ENCODE measurements at regions of chr14 and their contacts with region 1.

Region 1: GRCh38 chr14:60753264-60754119 is 18.9 kb downstream of the MNAT1 start:
- DNase-seq: peak; percentile 65
- H3K4me3 Mint-ChIP-seq: peak overlapping the region; percentile 29
- H3K27ac Mint-ChIP-seq: peak overlapping the region; percentile 66
- H3K4me1 Mint-ChIP-seq: peaks cover 29% of the 10 kb centered on the region
- H3K27me3 Mint-ChIP-seq: peaks cover 5% of the 10 kb centered on the region

Region 2: DNA sequence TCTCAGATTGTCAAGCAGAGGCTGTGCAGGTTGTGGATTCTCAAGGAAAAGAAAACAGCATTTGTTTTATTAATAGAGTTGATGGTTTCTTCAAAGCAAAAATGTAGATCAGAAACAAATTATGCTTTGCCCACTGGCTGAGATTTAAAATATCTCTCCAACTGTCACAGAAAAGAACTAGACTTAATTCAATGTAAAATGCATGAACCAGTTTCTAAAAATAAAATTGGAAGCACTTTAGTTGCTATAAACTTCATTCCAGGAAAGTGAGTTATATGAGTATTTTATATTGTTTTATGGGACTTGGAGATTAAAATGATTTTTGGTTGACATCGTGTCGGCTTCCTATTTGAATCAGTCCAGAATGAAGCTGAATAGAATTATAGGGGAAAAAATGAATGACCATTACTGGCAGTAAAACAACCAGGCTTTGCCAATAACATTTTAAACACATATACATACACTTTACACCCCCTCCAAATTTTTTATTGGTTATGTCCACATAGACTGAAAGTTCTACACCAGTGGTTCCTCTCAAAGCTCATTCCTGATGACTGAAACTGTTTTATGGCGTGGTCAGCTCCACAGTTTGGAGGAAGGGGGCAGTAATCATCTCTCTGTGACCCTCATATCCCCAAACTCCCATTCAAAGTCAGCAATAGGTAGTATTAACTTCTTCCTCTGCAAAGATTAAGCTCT is 1620.5 kb before region 1 on chr14:
- CTCF ChIA-PET with region 1: no interaction called
- POLR2A ChIA-PET with region 1: no interaction called
- intact Hi-C with region 1: no loop called
- DNase-seq: no peak
- H3K4me3 Mint-ChIP-seq: no peak overlapping the region
- H3K27ac Mint-ChIP-seq: no peak overlapping the region
- H3K4me1 Mint-ChIP-seq: no peaks in the 10 kb centered on the region
- H3K27me3 Mint-ChIP-seq: peaks cover 7% of the 10 kb centered on the region

Region 3: DNA sequence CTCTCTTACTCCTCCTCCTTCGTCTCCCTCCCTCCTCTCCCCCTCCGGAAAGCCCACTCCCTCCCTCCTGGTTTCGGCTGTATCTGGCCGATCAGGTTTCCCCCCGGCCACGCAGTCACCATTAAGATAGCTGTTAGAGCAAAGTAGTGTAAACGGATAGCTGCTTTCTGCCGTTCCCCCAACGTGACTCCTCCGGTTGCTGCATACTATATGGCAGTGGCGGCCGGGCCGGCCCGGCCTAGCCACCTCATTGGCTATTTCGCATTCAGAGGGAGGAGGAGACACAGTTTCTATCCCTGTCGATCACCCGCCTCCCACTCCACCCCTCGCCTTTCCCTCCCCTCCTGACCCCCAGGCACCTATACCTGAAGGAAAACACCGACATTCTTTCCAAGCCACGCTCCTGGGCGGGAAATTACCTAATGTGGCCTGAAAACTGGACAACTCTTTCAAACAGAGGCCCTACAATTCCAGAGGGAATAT is 29.3 kb before region 1 on chr14 and contains the start of gene SIX4:
- CTCF ChIA-PET with region 1: interaction called, 3 read pairs
- POLR2A ChIA-PET with region 1: no interaction called
- intact Hi-C with region 1: loop called (anchors 1 kb)
- DNase-seq: peak; percentile 34
- H3K4me3 Mint-ChIP-seq: peak within 1 kb of the TSS; percentile 79
- H3K27ac Mint-ChIP-seq: no peak within 1 kb of the TSS
- H3K4me1 Mint-ChIP-seq: peaks cover 11% of the 10 kb centered on the region
- H3K27me3 Mint-ChIP-seq: peaks cover 71% of the 10 kb centered on the region
- total RNA-seq, gene SIX4: 0.17 TPM in 1 of 2 experiments, not detected in the other

Region 4: DNA sequence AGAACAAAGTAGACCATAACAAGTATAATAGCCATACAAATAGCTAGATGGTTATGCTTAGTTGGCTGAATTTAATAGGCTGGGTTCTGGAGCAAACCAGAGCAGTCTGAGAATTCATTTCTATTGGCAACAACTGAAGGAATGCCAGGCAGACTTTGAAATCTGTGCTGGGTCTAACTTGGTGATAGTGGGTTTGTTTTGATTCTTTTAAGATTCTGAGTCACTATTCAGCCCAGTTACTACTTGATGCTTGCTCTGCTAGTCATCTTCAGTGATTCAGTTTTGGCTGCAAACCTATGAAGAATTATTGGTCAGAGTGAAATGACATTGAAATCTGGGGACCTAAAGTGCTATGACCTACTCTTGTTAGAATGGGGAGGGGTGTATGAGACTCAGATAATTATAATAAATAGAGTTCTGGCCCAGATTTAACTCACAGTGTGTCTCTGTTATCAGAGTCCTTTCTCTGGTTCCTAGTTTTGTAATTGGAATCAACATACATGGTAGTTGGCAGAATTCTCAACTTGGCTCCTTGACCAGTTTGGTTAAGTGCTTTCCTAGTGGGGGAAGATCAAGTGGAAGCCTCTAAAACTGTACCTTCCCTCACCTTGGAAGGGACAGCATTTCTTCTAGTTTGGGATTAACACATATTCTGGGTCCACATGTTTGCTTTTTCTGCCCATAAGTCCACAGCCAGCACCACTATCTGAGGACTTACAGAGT is 24.5 kb after region 1 on chr14:
- CTCF ChIA-PET with region 1: no interaction called
- POLR2A ChIA-PET with region 1: interaction called, 3 read pairs
- intact Hi-C with region 1: loop called (anchors 1 kb)
- DNase-seq: no peak
- H3K4me3 Mint-ChIP-seq: no peak overlapping the region
- H3K27ac Mint-ChIP-seq: no peak overlapping the region
- H3K4me1 Mint-ChIP-seq: peaks cover 11% of the 10 kb centered on the region
- H3K27me3 Mint-ChIP-seq: no peaks in the 10 kb centered on the region

Region 5: GRCh38 chr14:60926002-60926401 is 172.5 kb after region 1 on chr14:
- CTCF ChIA-PET with region 1: no interaction called
- POLR2A ChIA-PET with region 1: no interaction called
- intact Hi-C with region 1: no loop called
- DNase-seq: no peak
- H3K4me3 Mint-ChIP-seq: no peak overlapping the region
- H3K27ac Mint-ChIP-seq: no peak overlapping the region
- H3K4me1 Mint-ChIP-seq: no peaks in the 10 kb centered on the region
- H3K27me3 Mint-ChIP-seq: no peaks in the 10 kb centered on the region

Region 6: DNA sequence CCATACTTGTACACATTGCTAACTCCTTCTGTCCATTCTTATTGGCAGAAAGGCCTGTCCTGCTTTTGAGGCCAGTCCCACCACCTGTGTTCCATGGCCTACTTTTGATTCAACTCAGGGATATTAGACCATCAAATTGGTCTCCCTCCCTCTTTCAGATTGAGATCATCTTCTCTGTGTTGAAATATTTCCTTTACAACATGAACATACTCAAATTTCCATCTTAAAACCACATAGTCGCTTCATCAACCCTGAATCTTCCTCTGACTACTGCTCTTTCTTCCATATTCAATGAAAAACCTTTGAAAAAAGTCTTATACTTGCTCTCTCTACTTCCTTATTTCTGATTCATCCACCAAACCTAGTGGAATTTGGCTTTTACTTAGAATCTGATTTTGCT is 192.5 kb after region 1 on chr14:
- CTCF ChIA-PET with region 1: no interaction called
- POLR2A ChIA-PET with region 1: no interaction called
- intact Hi-C with region 1: loop called (anchors 5 kb)
- DNase-seq: no peak
- H3K4me3 Mint-ChIP-seq: no peak overlapping the region
- H3K27ac Mint-ChIP-seq: peak overlapping the region; percentile 30
- H3K4me1 Mint-ChIP-seq: peaks cover 13% of the 10 kb centered on the region
- H3K27me3 Mint-ChIP-seq: no peaks in the 10 kb centered on the region

Region 7: DNA sequence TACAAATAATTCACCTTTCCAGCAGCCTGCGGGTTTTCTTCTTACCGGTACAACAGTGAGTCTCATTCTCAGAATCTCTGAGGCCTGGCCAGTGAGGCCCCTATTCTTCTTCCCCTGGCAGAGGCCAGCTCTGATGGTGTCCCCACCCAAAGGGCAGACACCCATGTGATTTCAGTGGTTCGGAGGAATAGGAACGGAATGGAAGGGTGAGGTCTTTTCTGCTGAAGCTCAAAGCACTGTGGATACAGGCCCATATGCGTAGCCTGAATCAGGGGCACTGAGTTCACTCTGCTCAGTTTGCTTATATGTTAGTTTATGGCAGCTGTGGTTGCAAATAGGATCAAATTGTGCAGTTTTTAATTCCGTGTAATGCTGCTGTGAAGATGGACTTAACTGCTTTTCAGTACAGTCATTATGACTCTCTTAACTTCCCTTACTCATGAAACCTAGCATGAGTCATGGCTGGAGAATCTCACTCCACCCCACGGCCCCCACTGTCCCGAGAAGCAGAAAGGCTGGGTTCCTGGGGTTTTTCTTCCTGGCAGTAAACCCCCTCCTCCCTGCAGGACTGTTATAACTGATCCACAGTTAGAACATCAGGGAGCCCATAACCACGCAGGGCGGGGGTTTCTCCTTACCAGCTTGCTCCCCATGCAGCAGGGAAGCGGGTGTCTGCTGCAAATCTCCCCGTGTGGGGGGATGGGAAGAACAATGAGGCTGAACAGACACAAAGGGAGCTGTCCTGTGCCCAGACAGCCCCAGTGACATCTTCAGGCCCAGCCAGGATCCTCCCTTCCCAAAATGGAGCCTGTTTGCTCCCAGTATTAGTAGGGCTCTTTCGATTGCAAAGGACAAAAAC is 350.2 kb after region 1 on chr14:
- CTCF ChIA-PET with region 1: no interaction called
- POLR2A ChIA-PET with region 1: no interaction called
- intact Hi-C with region 1: loop called (anchors 2 kb)
- DNase-seq: peak; percentile 71
- H3K4me3 Mint-ChIP-seq: no peak overlapping the region
- H3K27ac Mint-ChIP-seq: peak overlapping the region; percentile 81
- H3K4me1 Mint-ChIP-seq: peaks cover 30% of the 10 kb centered on the region
- H3K27me3 Mint-ChIP-seq: no peaks in the 10 kb centered on the region

Measured in activated CD4-positive, alpha-beta memory T cell treated with anti-CD3 and anti-CD28 coated beads for 36 hours (primary cell).